Caco-2 (cell line): ENCODE measurements at regions of chr4 and their contacts with region 1.

Region 1: DNA sequence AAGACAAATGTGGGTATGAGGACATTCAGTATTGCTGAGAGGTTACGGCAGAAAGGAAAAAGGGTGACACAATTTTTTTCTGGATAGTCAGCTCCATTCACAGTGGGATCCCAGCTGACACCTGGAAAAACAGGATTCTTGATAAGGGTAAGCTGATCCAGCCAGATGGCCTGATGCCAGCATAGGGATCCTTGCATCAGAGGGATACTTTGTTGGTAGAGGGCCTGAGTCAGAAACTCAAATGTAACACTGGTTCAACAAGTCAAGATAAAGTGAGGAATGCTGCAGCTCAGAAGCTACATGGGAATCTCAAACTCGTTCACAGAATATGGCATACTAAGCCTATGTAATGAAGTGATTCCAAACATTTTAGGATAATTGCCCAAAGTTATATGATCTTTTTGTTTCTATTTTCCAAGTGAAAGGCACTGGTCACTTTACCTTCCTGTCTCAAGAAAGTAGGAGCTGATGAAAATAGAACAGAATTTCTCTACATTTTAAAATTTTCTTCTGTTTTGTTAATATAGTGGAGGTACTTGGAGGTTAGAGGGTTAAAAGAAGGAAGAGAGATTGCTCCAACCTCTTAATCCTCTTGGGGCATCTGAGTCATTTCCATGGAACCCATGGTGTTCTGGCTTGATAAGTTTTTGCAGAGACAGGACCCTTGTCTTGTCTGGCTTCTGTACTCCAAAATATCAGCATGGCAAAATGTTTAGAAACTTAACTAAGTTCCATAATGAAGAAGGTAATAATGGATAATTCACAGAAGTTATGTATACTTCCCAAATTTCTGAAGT is 727.0 kb downstream of the C4orf33 start:
- DNase-seq: peak; percentile 45 to 57
- H3K4me3 ChIP-seq: no peak overlapping the region
- H3K4me3 Mint-ChIP-seq: no peak overlapping the region
- H3K27ac Mint-ChIP-seq: peak overlapping the region; percentile 16
- H3K4me1 ChIP-seq: peaks cover 6% of the 10 kb centered on the region
- H3K4me1 Mint-ChIP-seq: peaks cover 5% of the 10 kb centered on the region
- H3K27me3 ChIP-seq: no peaks in the 10 kb centered on the region
- H3K27me3 Mint-ChIP-seq: no peaks in the 10 kb centered on the region
- CTCF ChIP-seq: no peak

Region 2: GRCh38 chr4:129788486-129788885 is 34.4 kb before region 1 on chr4:
- CTCF ChIA-PET with region 1: no interaction called
- POLR2A ChIA-PET with region 1: no interaction called
- intact Hi-C with region 1: no loop called
- DNase-seq: no peak
- H3K4me3 ChIP-seq: no peak overlapping the region
- H3K4me3 Mint-ChIP-seq: no peak overlapping the region
- H3K27ac Mint-ChIP-seq: no peak overlapping the region
- H3K4me1 ChIP-seq: no peaks in the 10 kb centered on the region
- H3K4me1 Mint-ChIP-seq: no peaks in the 10 kb centered on the region
- H3K27me3 ChIP-seq: no peaks in the 10 kb centered on the region
- H3K27me3 Mint-ChIP-seq: no peaks in the 10 kb centered on the region
- CTCF ChIP-seq: no peak

Region 3: GRCh38 chr4:129806986-129807385 is 15.9 kb before region 1 on chr4:
- CTCF ChIA-PET with region 1: no interaction called
- POLR2A ChIA-PET with region 1: no interaction called
- intact Hi-C with region 1: loop called (anchors 1 kb)
- DNase-seq: no peak
- H3K4me3 ChIP-seq: no peak overlapping the region
- H3K4me3 Mint-ChIP-seq: peak overlapping the region; percentile 10
- H3K27ac Mint-ChIP-seq: peak overlapping the region; percentile 45
- H3K4me1 ChIP-seq: peaks cover 24% of the 10 kb centered on the region
- H3K4me1 Mint-ChIP-seq: peaks cover 20% of the 10 kb centered on the region
- H3K27me3 ChIP-seq: no peaks in the 10 kb centered on the region
- H3K27me3 Mint-ChIP-seq: no peaks in the 10 kb centered on the region
- CTCF ChIP-seq: no peak